Activated naive CD4-positive, alpha-beta T cell treated with anti-CD3 and anti-CD28 coated beads for 36 hours (primary cell): ENCODE measurements at regions of chr17 and their contacts with region 1.

Region 1: GRCh38 chr17:67824735-67825626 is at the start of gene BPTF:
- DNase-seq: peak; percentile 93
- H3K4me3 Mint-ChIP-seq: peak within 1 kb of the TSS; percentile 99
- H3K27ac Mint-ChIP-seq: peak within 1 kb of the TSS; percentile 98
- H3K4me1 Mint-ChIP-seq: peaks cover 27% of the 10 kb centered on the region
- H3K27me3 Mint-ChIP-seq: peaks cover 2% of the 10 kb centered on the region
- total RNA-seq, gene BPTF: 58.1 to 61.9 TPM

Region 2: GRCh38 chr17:67366193-67367157 is 458.5 kb before region 1 on chr17 and contains the start of gene PSMD12:
- CTCF ChIA-PET with region 1: no interaction called
- intact Hi-C with region 1: loop called (anchors 2 kb)
- DNase-seq: peak; percentile 95
- H3K4me3 Mint-ChIP-seq: peak within 1 kb of the TSS; percentile 90
- H3K27ac Mint-ChIP-seq: peak within 1 kb of the TSS; percentile 93
- H3K4me1 Mint-ChIP-seq: peaks cover 42% of the 10 kb centered on the region
- H3K27me3 Mint-ChIP-seq: no peaks in the 10 kb centered on the region
- total RNA-seq, gene PSMD12: 67.8 to 70.7 TPM

Region 3: DNA sequence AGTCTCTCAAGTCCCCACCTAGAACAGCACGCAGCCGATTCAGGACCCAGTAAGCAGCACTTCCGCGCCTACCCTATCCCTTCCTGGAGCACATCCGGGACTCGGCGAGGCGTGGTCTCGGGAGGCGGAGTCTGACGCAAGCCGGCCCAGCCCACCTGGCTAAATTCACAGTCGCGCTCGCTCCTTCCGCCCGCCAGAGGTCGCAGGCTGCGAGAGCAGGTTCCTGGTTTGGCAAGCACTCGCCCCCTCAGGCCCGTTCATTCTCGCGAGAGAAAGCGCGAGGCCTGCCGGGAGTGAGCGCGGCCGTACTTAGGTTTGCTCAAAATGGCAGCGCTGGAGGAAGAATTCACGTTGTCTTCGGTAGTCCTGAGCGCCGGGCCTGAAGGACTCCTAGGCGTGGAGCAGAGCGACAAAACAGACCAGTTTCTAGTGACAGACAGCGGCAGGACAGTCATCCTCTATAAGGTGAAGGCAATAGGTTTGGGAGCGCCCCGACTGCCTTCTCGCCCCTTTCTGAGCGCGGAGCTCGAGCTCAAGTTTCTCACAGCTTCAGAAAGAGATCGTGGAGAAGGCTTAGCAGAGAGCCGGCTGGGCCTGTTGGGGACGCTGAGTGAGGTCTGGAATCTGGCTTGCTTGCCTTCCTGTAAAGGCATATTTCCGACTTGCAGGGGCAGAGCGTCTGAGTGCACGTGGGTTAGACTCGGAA is 107.2 kb before region 1 on chr17 and contains the start of gene NOL11:
- CTCF ChIA-PET with region 1: interaction called, 4 read pairs
- intact Hi-C with region 1: loop called (anchors 1 kb)
- DNase-seq: peak; percentile 100
- H3K4me3 Mint-ChIP-seq: peak within 1 kb of the TSS; percentile 100
- H3K27ac Mint-ChIP-seq: peak within 1 kb of the TSS; percentile 99
- H3K4me1 Mint-ChIP-seq: peaks cover 20% of the 10 kb centered on the region
- H3K27me3 Mint-ChIP-seq: peaks cover 3% of the 10 kb centered on the region
- total RNA-seq, gene NOL11: 49.7 to 54.1 TPM

Region 4: GRCh38 chr17:67836205-67836987 is 11.4 kb after region 1 on chr17:
- CTCF ChIA-PET with region 1: no interaction called
- intact Hi-C with region 1: loop called (anchors 1 kb)
- DNase-seq: no peak
- H3K4me3 Mint-ChIP-seq: no peak overlapping the region
- H3K27ac Mint-ChIP-seq: peak overlapping the region; percentile 75
- H3K4me1 Mint-ChIP-seq: peaks cover 74% of the 10 kb centered on the region
- H3K27me3 Mint-ChIP-seq: no peaks in the 10 kb centered on the region

Region 5: DNA sequence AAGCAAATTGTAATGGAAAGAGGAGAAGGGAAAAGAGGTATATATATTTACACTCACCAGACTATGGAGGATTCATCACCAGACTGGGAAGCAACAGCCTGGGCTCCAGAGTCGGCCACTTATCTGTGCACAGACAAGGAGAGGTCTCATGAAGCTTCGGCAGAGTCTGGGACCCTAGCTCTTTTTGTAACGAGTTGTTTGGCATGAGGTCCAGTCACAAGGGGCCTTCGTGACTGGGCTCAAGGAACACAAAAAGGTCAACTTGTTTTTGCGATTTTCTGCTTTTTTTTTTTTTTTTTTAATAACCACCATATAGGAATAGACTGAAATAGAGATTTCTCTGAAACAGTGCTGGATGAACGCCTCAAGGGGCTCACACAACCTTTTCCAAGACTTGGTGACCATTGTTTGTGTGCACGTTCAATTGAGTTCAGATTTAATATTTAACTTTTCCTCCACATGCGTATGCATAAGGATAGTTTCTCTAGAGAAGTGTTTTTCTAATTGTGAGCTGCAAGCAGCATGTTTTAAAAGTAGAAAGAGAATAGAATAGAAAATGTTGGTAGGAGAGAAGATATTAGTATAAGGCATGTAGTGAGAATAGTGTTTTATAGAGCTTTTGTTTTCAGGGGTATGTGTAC is 26.1 kb after region 1 on chr17:
- CTCF ChIA-PET with region 1: no interaction called
- intact Hi-C with region 1: no loop called
- DNase-seq: no peak
- H3K4me3 Mint-ChIP-seq: no peak overlapping the region
- H3K27ac Mint-ChIP-seq: no peak overlapping the region
- H3K4me1 Mint-ChIP-seq: peaks cover 49% of the 10 kb centered on the region
- H3K27me3 Mint-ChIP-seq: no peaks in the 10 kb centered on the region

Region 6: GRCh38 chr17:67912656-67913055 is 87.7 kb after region 1 on chr17:
- CTCF ChIA-PET with region 1: no interaction called
- intact Hi-C with region 1: loop called (anchors 2 kb)
- DNase-seq: peak; percentile 8
- H3K4me3 Mint-ChIP-seq: no peak overlapping the region
- H3K27ac Mint-ChIP-seq: no peak overlapping the region
- H3K4me1 Mint-ChIP-seq: peaks cover 18% of the 10 kb centered on the region
- H3K27me3 Mint-ChIP-seq: no peaks in the 10 kb centered on the region

Region 7: GRCh38 chr17:68019675-68020408 is 194.9 kb after region 1 on chr17:
- CTCF ChIA-PET with region 1: no interaction called
- intact Hi-C with region 1: loop called (anchors 1 kb)
- DNase-seq: peak; percentile 99
- H3K4me3 Mint-ChIP-seq: peak overlapping the region; percentile 77
- H3K27ac Mint-ChIP-seq: peak overlapping the region; percentile 94
- H3K4me1 Mint-ChIP-seq: peaks cover 11% of the 10 kb centered on the region
- H3K27me3 Mint-ChIP-seq: peaks cover 2% of the 10 kb centered on the region